GM10248 (cell line): ENCODE measurements at regions of chr16 and their contacts with region 1.

Region 1: DNA sequence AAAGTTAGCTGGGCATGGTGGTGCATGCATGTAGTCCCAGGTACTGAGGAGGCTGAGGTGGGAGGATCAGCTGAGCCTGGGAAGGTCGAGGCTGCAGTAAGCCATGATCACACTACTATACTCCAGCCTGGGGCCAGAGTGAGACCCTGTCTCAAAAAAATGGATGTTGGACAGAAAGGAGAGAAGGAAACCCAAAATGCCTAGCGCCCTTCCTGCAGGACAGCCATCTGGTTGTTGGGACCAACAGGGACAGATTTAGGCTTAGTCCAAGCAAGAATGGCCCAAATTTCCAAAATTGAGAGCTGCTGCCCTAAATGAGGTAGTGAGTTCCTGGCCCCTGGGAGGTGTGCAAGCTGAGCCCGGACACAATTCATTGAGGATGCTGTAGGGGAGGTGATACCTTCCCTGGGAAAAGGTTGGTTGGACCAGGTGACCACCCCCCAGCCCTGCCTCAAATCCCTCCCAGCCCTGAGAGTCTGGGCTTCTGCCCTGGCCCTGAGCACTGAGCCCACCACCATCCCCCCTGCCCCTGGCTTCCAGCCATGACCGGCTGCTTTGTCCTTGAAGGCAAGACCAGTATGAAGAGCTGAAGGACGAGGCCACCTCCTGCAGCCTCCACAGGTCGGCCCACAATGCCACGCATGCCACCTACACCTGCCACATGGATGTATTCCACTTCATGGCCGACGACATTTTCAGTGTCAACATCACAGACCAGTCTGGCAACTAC is 35.1 kb downstream of the IL21R start:
- DNase-seq: peak; percentile 13
- CTCF ChIP-seq: no peak

Region 2: DNA sequence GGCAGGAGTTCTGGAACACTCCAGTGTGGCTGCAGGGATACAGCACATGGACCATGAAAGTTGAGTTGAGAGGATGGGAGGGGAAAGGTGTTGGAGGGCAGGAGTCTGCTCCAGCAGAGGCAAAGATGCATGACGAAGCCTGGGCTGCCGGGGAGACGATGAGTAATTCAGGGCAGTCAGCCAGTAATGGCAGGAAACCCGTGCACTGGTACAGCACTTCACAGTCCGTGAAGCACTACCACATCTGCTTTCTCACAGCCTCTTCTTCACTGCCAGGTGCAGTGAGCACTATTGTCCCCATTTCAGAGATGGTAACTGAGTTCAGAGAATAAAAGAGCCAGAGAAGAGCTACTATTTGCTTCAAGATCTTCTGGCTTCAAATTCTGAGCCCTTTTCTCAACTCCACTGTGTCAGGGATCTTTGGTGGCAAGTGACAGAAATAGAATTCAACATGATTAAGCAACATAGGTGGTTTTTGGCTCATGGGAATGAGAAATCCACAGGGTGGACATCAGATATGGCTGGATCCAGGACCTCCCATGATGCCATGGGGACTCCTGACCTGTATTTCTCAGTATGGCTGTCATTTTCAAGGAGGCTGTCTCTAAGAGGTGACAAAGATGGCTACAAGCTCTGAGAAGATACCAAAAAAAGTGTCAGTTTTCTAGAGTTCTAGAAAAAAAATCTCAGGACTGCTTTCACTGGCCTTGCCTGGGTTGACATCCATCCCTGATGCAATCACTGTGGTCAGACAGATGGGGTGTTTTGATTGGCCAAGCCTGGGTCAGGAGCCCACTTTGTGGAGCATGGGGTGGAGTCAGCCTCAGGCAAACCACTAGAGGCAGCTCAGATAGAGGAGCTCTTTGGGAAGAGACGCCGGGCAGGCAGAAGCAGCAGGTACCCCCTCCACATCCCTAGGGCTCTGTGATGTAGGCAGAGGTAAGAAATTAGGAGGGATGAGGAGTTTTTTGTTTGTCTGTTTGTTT is 10.4 kb before region 1 on chr16:
- CTCF ChIA-PET with region 1: interaction called, 10 read pairs
- POLR2A ChIA-PET with region 1: no interaction called
- DNase-seq: peak; percentile 81
- CTCF ChIP-seq: no peak

Region 3: GRCh38 chr16:27475561-27475960 is 38.5 kb after region 1 on chr16:
- CTCF ChIA-PET with region 1: no interaction called
- POLR2A ChIA-PET with region 1: no interaction called
- DNase-seq: no peak
- CTCF ChIP-seq: no peak